ENCODE measurements at regions of chr10 and their contacts with region 1.

Region 1: DNA sequence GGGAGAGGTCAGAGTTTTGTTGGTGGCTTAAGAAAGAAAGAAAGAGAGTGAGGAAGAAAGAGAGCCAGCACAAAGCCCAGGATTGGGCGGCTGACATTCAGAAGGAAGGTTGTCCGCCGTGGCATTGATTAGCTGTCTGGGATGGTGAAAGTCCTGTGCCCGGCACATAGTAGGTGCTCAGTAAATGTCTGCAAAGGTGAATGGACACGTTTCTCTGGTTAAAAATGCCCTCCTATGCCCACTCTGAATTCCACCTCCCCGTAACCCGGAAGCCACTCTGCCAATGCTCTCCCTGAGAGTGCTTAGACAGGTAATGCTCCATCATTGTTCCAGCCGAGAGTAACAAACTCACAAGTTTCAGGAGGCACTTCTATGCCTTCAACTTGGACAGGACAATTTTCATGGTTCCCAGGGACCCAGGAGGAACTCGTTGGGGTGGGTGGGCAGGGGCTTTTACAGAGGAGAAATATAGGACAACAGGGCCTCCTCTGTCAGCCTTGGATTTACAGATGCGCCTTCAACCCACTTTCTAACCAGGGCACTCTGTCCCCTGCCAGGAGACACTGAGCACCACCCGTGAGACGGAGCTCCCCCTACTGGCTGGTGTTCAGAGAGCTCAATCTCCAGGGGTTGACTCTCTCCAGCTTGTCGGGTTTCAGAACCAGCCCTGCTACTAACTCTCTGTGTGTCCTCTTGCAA is 411.5 kb upstream of the ZMIZ1 start:
- DNase-seq: peak; percentile 35 to 79
- H3K4me3 ChIP-seq: no peak overlapping the region
- H3K4me1 ChIP-seq: no peaks in the 10 kb centered on the region
- H3K27me3 ChIP-seq: no peaks in the 10 kb centered on the region

Region 2: DNA sequence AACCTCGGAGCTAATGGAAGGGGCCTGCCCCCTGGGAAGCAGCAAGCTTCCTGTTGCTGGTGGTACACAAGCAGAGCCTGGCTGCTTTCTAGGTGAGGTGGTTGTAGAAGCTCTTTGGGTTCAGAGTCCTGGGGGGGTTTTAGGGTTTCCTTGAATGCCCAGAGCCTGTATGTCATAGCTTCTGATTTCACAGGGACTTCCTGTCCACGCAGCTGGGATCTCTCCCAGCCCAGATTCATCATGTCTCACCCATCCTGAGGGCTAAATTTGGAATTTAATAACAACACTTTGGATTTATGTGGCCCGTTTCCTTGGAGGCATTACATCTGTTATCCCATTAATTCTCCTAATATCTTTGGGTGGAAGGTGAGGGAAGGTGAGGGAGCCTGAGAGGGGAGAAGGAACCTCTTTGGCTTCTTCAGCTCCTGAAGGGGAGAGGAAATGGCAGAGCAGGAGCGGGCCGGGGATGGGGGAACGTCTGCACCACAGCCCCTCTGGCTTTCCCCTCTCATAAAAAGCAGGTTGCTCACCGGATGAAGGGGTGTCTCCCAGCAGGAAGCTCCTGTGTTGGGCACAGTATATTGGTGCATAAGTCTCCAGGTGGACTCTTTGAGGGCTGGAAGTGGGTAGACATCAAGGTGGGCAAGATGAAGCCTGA is 604.0 kb before region 1 on chr10:
- in situ Hi-C with region 1: loop called (anchors 25 kb)
- DNase-seq: no peak
- H3K4me3 ChIP-seq: no peak overlapping the region
- H3K4me1 ChIP-seq: no peaks in the 10 kb centered on the region
- H3K27me3 ChIP-seq: no peaks in the 10 kb centered on the region

Region 3: DNA sequence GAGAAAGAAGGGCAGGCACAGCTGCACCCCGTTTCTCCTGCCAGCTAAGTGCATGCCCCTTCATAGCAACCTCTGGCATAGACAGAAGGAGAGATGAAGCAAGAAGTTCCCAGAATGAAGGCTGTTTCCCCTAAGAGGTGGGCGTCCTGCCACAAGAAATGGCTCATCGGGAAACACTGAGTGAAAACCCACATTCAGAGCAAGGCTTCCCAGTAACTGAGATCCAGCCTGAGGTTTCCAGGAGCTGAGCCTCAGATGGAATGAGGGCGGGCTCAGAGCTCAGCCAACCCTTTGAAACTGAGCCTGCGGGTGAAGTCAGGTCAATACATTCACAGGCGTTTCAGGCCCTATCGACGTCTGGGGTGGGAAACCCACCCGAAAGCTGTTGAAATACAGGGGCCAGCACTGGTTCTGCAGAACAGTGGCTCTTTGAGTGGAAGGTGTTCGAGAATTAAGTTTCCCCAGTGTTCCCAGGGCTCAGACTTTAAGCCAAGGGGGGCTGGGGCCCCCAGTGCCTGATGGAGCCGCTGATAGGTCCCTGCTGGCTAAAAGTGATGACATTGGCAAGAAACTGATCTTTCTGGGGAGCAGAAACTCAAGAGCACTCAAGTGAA is 113.5 kb before region 1 on chr10:
- in situ Hi-C with region 1: no loop called
- DNase-seq: no peak
- H3K4me3 ChIP-seq: no peak overlapping the region
- H3K4me1 ChIP-seq: no peaks in the 10 kb centered on the region
- H3K27me3 ChIP-seq: peaks cover 16% of the 10 kb centered on the region